ENCODE measurements at regions of chr4 and their contacts with region 1.

Region 1: DNA sequence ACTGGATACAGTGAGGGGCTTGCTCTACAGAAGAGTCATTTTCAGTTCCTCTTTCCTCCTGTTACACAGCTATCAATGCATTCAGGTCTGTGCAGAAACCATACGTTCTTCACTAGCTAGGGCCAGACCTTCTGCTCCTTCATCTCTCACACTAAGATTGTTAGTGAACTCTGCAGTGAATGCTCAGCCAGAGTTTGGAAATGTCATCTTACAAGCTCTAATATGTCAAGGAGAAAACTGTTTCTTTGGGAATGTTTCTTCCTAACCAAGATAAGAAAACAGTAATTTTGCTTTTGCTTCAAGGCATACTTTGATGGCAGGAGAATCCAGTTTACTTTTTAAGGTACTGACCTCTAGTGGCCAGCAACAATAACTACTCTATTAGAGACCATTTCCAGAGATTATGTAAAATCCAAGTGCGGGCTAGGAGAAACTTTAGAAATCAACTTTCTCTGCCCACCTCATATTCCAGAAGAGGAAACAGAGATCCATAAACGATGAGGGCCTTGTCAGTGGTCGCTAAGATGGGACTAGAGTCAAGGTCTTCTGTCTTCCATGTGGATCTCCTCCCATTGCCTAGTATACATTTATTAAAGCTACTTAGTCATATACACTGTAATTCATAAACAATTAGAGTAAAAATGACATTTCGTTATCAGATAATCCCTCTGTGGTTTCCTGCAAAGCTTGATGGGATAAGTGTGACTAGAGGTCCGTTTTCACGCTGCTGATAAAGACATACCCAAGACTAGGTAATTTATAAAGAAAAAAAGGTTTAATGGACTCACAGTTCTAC is 12.1 kb upstream of the CC2D2A start:
- DNase-seq: peak; percentile 83
- ATAC-seq: peak; percentile 99
- H3K4me3 ChIP-seq: peak overlapping the region in 2 of 5 experiments; percentile 24 to 30
- H3K4me3 Mint-ChIP-seq: peak overlapping the region; percentile 81
- H3K27ac ChIP-seq: peak overlapping the region in 1 of 2 donors; percentile 24
- H3K27ac Mint-ChIP-seq: peak overlapping the region; percentile 80
- H3K4me1 ChIP-seq: peaks cover 14 to 16% of the 10 kb centered on the region in 2 donors
- H3K4me1 Mint-ChIP-seq: peaks cover 19% of the 10 kb centered on the region
- H3K27me3 ChIP-seq: no peaks in the 10 kb centered on the region
- H3K27me3 Mint-ChIP-seq: peaks cover 12% of the 10 kb centered on the region
- CTCF ChIP-seq: peak; percentile 88

Region 2: DNA sequence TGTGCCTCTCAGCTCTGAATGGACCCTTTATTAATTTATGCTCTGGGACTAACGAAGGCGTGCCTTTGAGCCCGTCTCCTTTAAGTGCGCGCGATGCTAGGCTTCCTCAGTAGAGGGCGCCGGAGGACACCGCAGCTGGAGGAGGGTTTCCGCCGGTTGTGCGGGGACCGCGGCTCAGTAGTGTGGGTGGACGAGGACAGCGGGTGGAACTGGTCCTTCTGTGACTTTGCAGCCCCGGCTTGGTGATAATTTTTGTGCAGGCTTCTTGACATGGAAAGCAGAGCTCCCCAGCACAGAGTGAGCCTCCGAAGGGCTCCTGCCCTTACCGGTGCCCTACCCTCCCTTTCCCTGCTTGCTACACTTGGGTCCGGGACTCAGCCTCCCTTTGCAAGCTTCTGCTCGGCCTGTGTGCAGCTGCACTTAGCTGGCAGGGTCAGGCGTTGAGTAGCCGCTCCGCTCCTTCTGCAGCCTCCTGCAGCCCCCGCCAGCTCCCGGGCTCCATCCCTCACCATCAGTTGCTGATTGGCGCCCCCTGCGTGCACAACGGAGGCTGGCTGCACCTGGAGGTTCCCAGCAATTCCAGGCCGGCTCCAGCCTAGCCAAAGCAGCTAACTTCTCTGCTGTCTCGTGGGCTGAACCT is 1803.3 kb before region 1 on chr4:
- CTCF ChIA-PET with region 1: interaction called, 22 read pairs
- POLR2A ChIA-PET with region 1: no interaction called
- intact Hi-C with region 1: no loop called
- DNase-seq: peak; percentile 80
- ATAC-seq: peak; percentile 91
- H3K4me3 ChIP-seq: peak overlapping the region; percentile 47 to 60 (median 57)
- H3K4me3 Mint-ChIP-seq: peak overlapping the region; percentile 92
- H3K27ac ChIP-seq: no peak overlapping the region
- H3K27ac Mint-ChIP-seq: no peak overlapping the region
- H3K4me1 ChIP-seq: peaks cover 5 to 14% of the 10 kb centered on the region in 2 donors
- H3K4me1 Mint-ChIP-seq: peaks cover 14% of the 10 kb centered on the region
- H3K27me3 ChIP-seq: peaks cover 0 to 8% (median 0%) of the 10 kb centered on the region in 4 experiments
- H3K27me3 Mint-ChIP-seq: peaks cover 11% of the 10 kb centered on the region
- CTCF ChIP-seq: peak; percentile 88

Region 3: DNA sequence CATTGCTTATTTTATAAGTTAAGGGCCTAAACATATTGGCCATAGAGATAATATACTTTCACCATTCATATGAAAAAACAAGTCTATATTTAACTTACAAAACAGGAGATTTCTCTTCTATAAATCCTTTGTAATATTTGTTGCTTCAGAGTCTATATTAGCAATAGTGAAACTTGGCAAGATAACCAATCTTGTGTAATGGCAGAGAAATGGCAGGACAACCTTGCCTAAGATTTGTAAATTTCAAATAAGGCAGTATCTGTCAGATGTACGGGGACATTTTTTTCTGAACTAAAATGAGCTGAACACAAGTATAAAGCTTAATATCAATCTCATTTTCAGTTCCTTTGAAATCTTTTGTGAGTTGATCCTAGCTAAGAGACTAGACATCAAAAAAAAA is 473.2 kb before region 1 on chr4:
- CTCF ChIA-PET with region 1: no interaction called
- POLR2A ChIA-PET with region 1: no interaction called
- intact Hi-C with region 1: no loop called
- DNase-seq: no peak
- ATAC-seq: no peak
- H3K4me3 ChIP-seq: no peak overlapping the region
- H3K4me3 Mint-ChIP-seq: no peak overlapping the region
- H3K27ac ChIP-seq: no peak overlapping the region
- H3K27ac Mint-ChIP-seq: no peak overlapping the region
- H3K4me1 ChIP-seq: no peaks in the 10 kb centered on the region
- H3K4me1 Mint-ChIP-seq: no peaks in the 10 kb centered on the region
- H3K27me3 ChIP-seq: no peaks in the 10 kb centered on the region
- H3K27me3 Mint-ChIP-seq: peaks cover 20% of the 10 kb centered on the region
- CTCF ChIP-seq: no peak

Region 4: DNA sequence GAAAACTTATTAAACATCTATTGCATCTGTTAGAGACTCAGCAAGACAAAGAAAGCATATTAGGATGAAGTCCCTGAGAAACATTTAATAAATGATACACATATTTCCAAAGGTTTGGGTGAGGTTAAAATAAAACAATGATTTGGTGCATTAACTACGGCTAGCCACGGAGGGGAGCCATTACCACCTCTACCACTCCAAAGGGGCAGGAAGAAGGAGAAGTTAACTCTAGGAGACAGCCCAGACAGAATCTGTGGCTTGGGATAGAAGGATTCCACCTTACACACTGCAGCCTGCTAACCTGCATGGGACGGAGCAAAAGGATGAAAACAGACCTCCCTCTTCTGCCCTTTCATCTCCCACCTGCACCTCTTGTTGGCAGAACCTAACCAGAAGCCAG is 218.9 kb before region 1 on chr4:
- CTCF ChIA-PET with region 1: interaction called, 78 read pairs
- POLR2A ChIA-PET with region 1: no interaction called
- intact Hi-C with region 1: loop called (anchors 1 kb)
- DNase-seq: peak; percentile 45
- ATAC-seq: no peak
- H3K4me3 ChIP-seq: no peak overlapping the region
- H3K4me3 Mint-ChIP-seq: no peak overlapping the region
- H3K27ac ChIP-seq: no peak overlapping the region
- H3K27ac Mint-ChIP-seq: no peak overlapping the region
- H3K4me1 ChIP-seq: peaks cover 3 to 5% of the 10 kb centered on the region in 2 donors
- H3K4me1 Mint-ChIP-seq: peaks cover 10% of the 10 kb centered on the region
- H3K27me3 ChIP-seq: no peaks in the 10 kb centered on the region
- H3K27me3 Mint-ChIP-seq: peaks cover 3% of the 10 kb centered on the region
- CTCF ChIP-seq: peak; percentile 45

Region 5: GRCh38 chr4:15410750-15411149 is 46.9 kb before region 1 on chr4:
- CTCF ChIA-PET with region 1: interaction called, 10 read pairs
- POLR2A ChIA-PET with region 1: no interaction called
- intact Hi-C with region 1: loop called (anchors 5 kb)
- DNase-seq: peak; percentile 57
- ATAC-seq: peak; percentile 63
- H3K4me3 ChIP-seq: peak overlapping the region in 4 of 5 experiments; percentile 34 to 42 (median 39)
- H3K4me3 Mint-ChIP-seq: peak overlapping the region; percentile 81
- H3K27ac ChIP-seq: peak overlapping the region; percentile 61 to 63
- H3K27ac Mint-ChIP-seq: peak overlapping the region; percentile 81
- H3K4me1 ChIP-seq: peaks cover 62 to 63% of the 10 kb centered on the region in 2 donors
- H3K4me1 Mint-ChIP-seq: peaks cover 69% of the 10 kb centered on the region
- H3K27me3 ChIP-seq: no peaks in the 10 kb centered on the region
- H3K27me3 Mint-ChIP-seq: no peaks in the 10 kb centered on the region
- CTCF ChIP-seq: no peak

Region 6: GRCh38 chr4:15444872-15445547 is 12.6 kb before region 1 on chr4:
- CTCF ChIA-PET with region 1: interaction called, 31 read pairs
- POLR2A ChIA-PET with region 1: no interaction called
- intact Hi-C with region 1: no loop called
- DNase-seq: no peak
- ATAC-seq: no peak
- H3K4me3 ChIP-seq: no peak overlapping the region
- H3K4me3 Mint-ChIP-seq: no peak overlapping the region
- H3K27ac ChIP-seq: no peak overlapping the region
- H3K27ac Mint-ChIP-seq: no peak overlapping the region
- H3K4me1 ChIP-seq: no peaks in the 10 kb centered on the region
- H3K4me1 Mint-ChIP-seq: no peaks in the 10 kb centered on the region
- H3K27me3 ChIP-seq: no peaks in the 10 kb centered on the region
- H3K27me3 Mint-ChIP-seq: peaks cover 10% of the 10 kb centered on the region
- CTCF ChIP-seq: no peak

Region 7: GRCh38 chr4:15649914-15650545 is 192.4 kb after region 1 on chr4:
- CTCF ChIA-PET with region 1: no interaction called
- POLR2A ChIA-PET with region 1: no interaction called
- intact Hi-C with region 1: loop called (anchors 5 kb)
- DNase-seq: peak; percentile 78
- ATAC-seq: peak; percentile 54
- H3K4me3 ChIP-seq: no peak overlapping the region
- H3K4me3 Mint-ChIP-seq: no peak overlapping the region
- H3K27ac ChIP-seq: no peak overlapping the region
- H3K27ac Mint-ChIP-seq: no peak overlapping the region
- H3K4me1 ChIP-seq: peaks cover 22 to 42% of the 10 kb centered on the region in 2 donors
- H3K4me1 Mint-ChIP-seq: peaks cover 50% of the 10 kb centered on the region
- H3K27me3 ChIP-seq: no peaks in the 10 kb centered on the region
- H3K27me3 Mint-ChIP-seq: no peaks in the 10 kb centered on the region
- CTCF ChIP-seq: peak; percentile 77

Measured in B cell (primary cell).